ENCODE measurements at regions of chr14 and their contacts with region 1.

Region 1: GRCh38 chr14:70887207-70887681 is 20.0 kb upstream of the PCNX1 start:
- DNase-seq: no peak
- H3K4me3 Mint-ChIP-seq: peak overlapping the region; percentile 65
- H3K27ac Mint-ChIP-seq: peak overlapping the region; percentile 95
- H3K4me1 Mint-ChIP-seq: peaks cover 94% of the 10 kb centered on the region
- H3K27me3 Mint-ChIP-seq: no peaks in the 10 kb centered on the region

Region 2: GRCh38 chr14:70873627-70874026 is 13.6 kb before region 1 on chr14:
- CTCF ChIA-PET with region 1: interaction called, 10 read pairs
- DNase-seq: peak; percentile 36
- H3K4me3 Mint-ChIP-seq: no peak overlapping the region
- H3K27ac Mint-ChIP-seq: no peak overlapping the region
- H3K4me1 Mint-ChIP-seq: peaks cover 23% of the 10 kb centered on the region
- H3K27me3 Mint-ChIP-seq: no peaks in the 10 kb centered on the region

Measured in activated naive CD4-positive, alpha-beta T cell treated with anti-CD3 and anti-CD28 coated beads, Interleukin-2, amount 10 ng/mL, durations not matched to agents 7 days and 5 days (primary cell).